Vagina (tissue), 2 donors: ENCODE measurements at regions of chrX and their contacts with region 1.

Region 1: DNA sequence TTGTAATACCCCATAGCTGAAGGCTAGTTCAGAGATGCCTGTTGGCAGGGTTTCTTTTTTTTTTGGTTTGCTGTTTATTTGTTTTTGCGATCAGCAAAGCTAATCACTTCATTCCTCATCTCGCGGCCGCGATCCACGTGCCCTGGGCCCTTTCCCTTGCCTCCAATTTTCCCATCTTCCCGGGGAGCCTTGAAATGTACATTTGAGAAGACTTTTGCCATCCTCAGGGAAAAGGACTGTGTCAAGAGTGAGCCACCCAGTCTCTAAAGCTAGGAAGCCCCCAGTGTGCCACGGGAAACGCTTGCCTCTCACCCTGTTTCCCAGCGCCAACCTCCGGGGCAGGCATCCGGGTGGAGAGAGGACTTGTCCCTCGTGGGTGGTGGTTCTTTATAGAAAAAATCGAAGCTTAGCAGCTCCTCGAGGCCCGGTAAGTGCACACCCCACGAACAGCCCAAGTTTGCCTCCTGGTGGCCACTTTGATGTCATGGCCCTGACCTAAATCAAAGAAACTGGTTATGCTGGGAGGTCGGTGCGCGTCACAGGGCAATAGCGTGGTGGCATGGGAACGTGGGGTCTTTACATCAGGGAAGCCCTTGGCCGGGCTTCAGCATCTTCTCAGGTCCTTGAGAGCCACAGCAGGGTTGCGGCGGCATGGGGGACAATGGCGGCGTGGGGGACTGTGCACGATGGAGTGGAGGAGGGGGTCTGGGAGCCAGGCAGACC is 42.0 kb downstream of the MAP7D3 start:
- DNase-seq: no peak
- H3K4me3 ChIP-seq: no peak overlapping the region
- H3K27ac ChIP-seq: peak overlapping the region; percentile 57
- H3K4me1 ChIP-seq: peaks cover 23% of the 10 kb centered on the region
- H3K27me3 ChIP-seq: no peaks in the 10 kb centered on the region
- CTCF ChIP-seq: peak; percentile 11 to 64 (median 41)
- POLR2A ChIP-seq: no peak

Region 2: GRCh38 chrX:136021160-136021559 is 188.0 kb before region 1 on chrX:
- intact Hi-C with region 1: no loop called
- DNase-seq: no peak
- H3K4me3 ChIP-seq: no peak overlapping the region
- H3K27ac ChIP-seq: no peak overlapping the region
- H3K4me1 ChIP-seq: no peaks in the 10 kb centered on the region
- H3K27me3 ChIP-seq: no peaks in the 10 kb centered on the region
- CTCF ChIP-seq: no peak
- POLR2A ChIP-seq: no peak

Region 3: DNA sequence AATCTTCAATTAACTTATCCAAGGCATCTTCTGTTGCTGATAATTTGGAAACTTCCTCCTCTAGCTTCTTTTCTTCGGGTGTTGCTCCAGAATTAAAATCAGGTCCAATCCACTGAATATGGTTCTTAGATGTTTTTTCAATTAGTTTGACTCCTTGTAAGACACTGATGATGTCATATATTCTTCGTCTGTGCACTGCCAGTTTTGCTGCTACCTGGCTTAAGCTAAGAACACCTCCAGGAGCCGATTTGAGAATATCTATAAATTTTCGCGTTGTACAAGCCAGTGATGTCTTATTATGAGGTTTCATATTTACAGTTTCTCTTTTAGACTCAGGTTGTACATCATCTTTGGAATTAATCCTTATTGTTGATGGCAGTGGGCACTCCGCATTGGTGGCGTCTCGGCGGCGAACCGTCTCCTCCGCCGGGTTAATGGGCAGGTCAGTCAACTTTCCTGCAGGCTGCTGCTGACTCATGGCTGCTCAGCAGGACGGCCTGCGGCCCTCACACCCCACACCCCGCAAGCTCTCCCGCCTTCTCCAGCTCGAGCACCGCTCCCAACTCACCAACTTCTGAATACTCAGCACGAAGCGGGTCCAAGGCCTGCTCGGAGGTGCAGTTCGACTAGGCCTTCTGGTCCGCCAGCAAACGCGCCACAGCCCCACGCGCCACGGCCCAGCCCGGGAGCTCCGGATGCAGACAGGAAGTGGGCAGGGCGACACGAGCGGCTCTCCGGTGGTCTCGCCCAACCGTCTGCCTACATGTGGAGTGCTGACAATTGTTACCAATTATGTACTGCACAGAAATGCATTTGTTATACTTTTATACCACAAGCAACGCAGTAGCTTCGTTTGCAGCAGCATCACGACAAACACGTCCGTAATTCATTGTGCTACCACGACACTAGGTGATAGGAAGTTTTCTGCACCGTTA is 111.0 kb before region 1 on chrX:
- intact Hi-C with region 1: no loop called
- DNase-seq: no peak
- H3K4me3 ChIP-seq: no peak overlapping the region
- H3K27ac ChIP-seq: no peak overlapping the region
- H3K4me1 ChIP-seq: no peaks in the 10 kb centered on the region
- H3K27me3 ChIP-seq: no peaks in the 10 kb centered on the region
- CTCF ChIP-seq: no peak
- POLR2A ChIP-seq: no peak

Region 4: DNA sequence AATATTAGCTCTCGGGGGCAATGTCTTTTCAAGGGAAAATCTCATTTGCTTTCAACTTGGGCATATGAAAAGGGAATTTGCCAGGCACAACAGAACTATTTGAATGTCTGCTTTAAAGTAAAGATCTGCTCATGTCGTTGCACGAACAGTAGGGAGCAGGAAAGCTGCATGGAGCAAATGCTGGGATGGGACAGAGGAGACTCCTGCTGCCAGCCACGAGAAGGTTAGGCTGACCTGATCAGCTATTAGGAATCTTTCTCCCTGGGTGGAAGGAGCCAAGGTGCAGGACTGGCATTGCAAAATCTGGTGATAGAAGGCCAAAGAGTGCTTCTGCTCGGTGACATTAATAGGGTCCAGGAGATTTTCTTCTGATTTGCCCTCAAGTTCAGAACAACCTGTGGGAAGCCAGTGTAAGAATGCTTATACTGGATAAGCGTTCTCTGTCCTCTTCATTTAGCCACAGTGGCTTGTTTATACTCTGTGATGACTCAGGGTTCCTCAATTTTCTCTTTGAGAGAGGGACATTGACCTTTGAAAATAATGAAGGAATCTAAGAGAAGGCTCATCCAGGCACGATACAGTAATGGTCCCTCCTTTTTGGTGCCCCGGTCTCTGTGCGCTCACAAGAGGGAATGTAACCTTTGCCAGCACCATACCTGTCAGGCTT is 38.9 kb before region 1 on chrX:
- intact Hi-C with region 1: loop called (anchors 5 kb)
- DNase-seq: no peak
- H3K4me3 ChIP-seq: no peak overlapping the region
- H3K27ac ChIP-seq: peak overlapping the region; percentile 66
- H3K4me1 ChIP-seq: peaks cover 28% of the 10 kb centered on the region
- H3K27me3 ChIP-seq: no peaks in the 10 kb centered on the region
- CTCF ChIP-seq: no peak
- POLR2A ChIP-seq: no peak

Region 5: DNA sequence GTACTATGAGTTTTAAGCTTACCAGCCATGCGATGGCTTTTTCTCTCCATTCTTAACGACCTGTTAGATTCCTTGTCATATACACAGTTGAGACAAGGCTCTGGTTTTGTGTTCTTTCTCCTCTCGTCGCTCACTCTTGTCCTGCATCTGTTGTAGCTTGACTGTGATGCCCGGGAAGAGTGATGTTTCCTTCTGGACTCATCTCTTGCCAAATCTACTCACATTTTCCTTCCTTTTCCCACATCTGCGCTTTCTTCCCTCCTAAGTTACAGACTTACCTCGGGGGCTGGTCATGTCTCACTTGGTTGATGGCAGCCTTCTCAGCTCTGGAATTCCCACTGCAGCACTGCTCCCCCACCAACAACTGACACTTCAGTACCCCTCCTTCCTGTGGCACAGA is 46.8 kb after region 1 on chrX:
- intact Hi-C with region 1: loop called (anchors 2 kb)
- DNase-seq: no peak
- H3K4me3 ChIP-seq: no peak overlapping the region
- H3K27ac ChIP-seq: peak overlapping the region; percentile 51
- H3K4me1 ChIP-seq: peaks cover 4% of the 10 kb centered on the region
- H3K27me3 ChIP-seq: no peaks in the 10 kb centered on the region
- CTCF ChIP-seq: no peak
- POLR2A ChIP-seq: no peak